ENCODE measurements at regions of chrX and their contacts with region 1.

Region 1: DNA sequence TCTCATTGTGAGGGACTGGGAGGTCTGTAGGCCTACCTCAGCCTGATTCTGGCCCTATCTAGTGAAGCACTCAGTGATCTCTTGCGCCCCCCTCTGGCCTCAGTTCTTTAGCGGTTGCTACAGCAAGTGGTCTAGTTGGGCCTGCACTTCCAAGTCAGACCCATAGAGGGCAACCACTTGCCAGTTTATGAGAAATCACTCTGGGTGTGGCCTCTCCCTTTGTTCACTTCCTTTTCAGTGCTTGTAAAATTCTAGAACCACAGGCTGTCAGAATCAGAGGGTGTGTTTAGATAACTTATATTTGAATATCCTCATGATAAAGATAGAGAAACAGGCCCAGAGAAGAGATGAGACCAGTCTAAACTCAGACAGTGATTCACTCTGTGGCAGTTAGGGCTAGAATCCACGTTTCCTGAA is 60.9 kb upstream of the LAS1L start:
- DNase-seq: peak; percentile 83
- H3K4me3 Mint-ChIP-seq: peak overlapping the region; percentile 22
- H3K27ac Mint-ChIP-seq: peak overlapping the region; percentile 90
- H3K4me1 Mint-ChIP-seq: peaks cover 44% of the 10 kb centered on the region
- H3K27me3 Mint-ChIP-seq: no peaks in the 10 kb centered on the region

Region 2: DNA sequence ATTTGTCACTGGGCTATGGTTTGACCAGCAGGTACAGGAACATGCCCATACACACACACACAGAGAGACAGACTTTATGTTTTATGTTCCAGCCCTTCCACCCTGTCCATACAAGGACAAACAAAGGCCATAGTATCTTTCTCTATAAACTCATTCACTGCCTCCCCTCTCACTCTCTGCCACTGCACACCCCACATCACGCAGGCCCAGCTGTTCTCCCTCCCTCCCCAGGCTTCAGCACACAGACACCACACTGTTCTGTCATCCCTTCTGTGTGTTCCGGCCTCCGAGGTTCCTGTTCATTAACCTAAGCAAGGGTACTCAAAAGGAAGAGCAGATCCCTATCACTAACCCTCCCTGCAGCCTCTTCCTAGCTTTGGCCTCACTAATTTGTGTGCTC is 78.7 kb before region 1 on chrX:
- intact Hi-C with region 1: no loop called
- DNase-seq: no peak
- H3K4me3 Mint-ChIP-seq: no peak overlapping the region
- H3K27ac Mint-ChIP-seq: no peak overlapping the region
- H3K4me1 Mint-ChIP-seq: no peaks in the 10 kb centered on the region
- H3K27me3 Mint-ChIP-seq: no peaks in the 10 kb centered on the region

Region 3: DNA sequence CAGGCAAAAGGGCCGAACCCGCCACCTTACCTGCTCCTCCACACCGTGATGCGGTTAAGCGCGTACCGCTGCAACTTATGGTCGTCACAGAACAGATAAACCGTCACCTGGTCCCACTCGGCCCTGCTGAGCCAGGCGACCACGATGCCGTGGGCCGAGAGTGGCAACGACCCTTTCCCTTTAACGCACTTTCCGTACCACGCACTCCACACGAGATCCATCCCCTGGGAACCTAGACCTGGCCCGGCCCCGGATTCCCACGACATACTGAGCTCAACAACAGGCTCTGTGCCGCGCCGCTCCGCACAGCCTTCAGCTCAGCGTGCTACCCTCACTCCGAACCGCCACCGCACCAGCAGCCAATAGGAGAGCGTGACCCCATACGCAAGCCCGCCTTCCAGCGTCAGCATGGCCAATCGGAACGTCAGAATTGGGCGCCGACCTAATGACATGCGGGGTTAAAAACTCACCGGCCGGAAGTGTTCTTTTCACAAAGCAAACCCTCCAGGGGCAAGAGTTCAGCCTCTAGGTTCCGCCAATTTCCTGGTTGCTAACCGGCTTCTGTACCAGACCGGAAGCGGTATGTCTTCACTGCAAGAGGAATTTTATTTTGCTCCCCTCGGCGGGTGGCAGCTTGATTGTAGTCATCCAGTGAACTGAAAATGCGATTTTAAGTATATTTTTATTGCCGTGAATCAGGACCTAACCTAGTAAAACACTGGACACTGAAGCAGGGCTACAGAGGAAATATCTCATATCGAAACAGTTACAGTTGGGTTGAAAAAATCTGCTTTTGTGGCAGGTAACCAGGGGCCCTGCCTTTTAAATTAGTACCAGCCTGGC is 60.8 kb before region 1 on chrX and contains the start of gene LAS1L:
- intact Hi-C with region 1: loop called (anchors 2 kb)
- DNase-seq: peak; percentile 90
- H3K4me3 Mint-ChIP-seq: peak within 1 kb of the TSS; percentile 100
- H3K27ac Mint-ChIP-seq: peak within 1 kb of the TSS; percentile 99
- H3K4me1 Mint-ChIP-seq: peaks cover 11% of the 10 kb centered on the region
- H3K27me3 Mint-ChIP-seq: no peaks in the 10 kb centered on the region
- total RNA-seq, gene LAS1L: 54.0 and 55.9 TPM in 2 replicates

Region 4: DNA sequence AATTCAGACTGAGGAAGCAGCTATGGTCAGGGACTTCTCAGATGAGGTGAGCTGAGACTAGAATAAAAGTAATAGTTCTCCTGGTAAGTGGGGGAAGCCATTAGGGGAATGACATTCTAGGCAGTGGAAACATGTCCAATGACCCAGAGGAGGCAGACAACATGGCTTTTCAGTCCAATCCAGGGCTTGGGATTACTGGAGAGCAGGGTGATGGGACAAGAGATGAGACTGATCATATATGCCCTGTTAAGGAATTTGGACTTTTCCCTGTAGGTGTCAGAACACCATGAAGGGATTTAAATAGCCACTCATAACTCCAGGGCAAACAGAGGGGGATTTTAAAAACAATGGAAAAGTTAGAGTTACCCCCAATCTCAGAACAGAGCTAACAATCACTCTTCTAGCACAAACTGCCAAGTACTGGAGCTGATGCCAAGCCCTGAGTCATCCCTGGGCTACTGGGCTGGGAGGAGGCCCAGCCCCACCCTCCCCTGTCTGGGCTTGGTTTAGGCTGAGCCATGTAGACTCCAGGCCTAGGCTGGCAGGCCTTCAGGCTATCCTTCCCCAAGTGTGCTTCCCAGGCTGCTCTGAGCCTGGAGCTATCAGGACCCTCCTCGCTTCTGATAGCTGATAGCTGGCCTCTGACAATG is 49.3 kb after region 1 on chrX:
- intact Hi-C with region 1: no loop called
- DNase-seq: no peak
- H3K4me3 Mint-ChIP-seq: no peak overlapping the region
- H3K27ac Mint-ChIP-seq: no peak overlapping the region
- H3K4me1 Mint-ChIP-seq: peaks cover 8% of the 10 kb centered on the region
- H3K27me3 Mint-ChIP-seq: no peaks in the 10 kb centered on the region

Region 5: GRCh38 chrX:65667503-65668376 is 72.3 kb after region 1 on chrX and contains the start of gene MSN:
- intact Hi-C with region 1: loop called (anchors 1 kb)
- DNase-seq: peak; percentile 74
- H3K4me3 Mint-ChIP-seq: peak within 1 kb of the TSS; percentile 96
- H3K27ac Mint-ChIP-seq: peak within 1 kb of the TSS; percentile 96
- H3K4me1 Mint-ChIP-seq: peaks cover 48% of the 10 kb centered on the region
- H3K27me3 Mint-ChIP-seq: no peaks in the 10 kb centered on the region
- total RNA-seq, gene MSN: 473 and 476 TPM in 2 replicates

Region 6: DNA sequence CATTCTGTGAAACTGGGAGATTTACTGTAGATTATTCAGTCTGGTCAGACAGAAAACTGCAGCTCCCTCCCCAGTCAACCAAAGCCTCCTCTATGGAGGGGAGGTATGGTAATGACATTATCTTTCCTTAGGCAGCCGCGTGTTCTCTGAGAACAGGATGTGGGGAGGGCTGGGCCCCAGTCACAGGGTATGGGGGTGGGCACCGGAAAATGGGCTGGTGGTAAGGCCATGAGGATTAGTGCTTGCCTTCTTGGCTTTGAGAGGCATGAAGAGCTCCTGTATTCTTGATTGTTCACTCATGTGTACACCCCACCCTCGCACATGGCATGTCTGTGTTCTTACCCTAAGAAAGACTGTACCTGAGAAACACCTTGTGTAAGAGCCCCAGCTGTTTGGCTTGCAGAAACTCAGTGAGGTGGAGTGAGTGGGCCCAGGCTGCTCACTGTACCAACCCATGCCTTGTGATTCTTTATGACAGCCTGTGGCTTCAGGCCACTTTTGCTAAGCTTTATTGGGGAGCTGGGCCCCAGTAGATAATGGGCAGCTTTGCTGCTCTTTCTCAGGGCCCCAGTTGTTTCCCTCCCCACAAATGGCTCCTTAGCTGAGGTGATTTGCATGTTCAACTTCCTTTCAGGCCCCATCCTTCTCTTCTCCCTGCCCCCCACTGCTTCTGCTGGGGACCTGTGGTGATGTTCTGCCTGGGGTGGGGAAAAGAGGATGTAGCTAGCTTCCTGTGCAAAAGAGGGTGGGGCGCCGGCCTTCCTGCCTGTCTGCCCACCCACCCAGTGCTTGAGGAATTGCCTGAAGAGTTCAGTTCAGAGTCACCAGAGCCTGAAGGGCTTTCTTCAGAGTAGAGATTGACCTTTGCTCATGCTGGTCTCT is 102.7 kb after region 1 on chrX:
- intact Hi-C with region 1: loop called (anchors 1 kb)
- DNase-seq: peak; percentile 64
- H3K4me3 Mint-ChIP-seq: peak overlapping the region; percentile 45
- H3K27ac Mint-ChIP-seq: peak overlapping the region; percentile 94
- H3K4me1 Mint-ChIP-seq: peaks cover 71% of the 10 kb centered on the region
- H3K27me3 Mint-ChIP-seq: no peaks in the 10 kb centered on the region

Region 7: GRCh38 chrX:65723706-65724105 is 128.2 kb after region 1 on chrX:
- intact Hi-C with region 1: loop called (anchors 1 kb)
- DNase-seq: peak; percentile 16
- H3K4me3 Mint-ChIP-seq: peak overlapping the region; percentile 4
- H3K27ac Mint-ChIP-seq: peak overlapping the region; percentile 82
- H3K4me1 Mint-ChIP-seq: peaks cover 66% of the 10 kb centered on the region
- H3K27me3 Mint-ChIP-seq: no peaks in the 10 kb centered on the region

Region 8: DNA sequence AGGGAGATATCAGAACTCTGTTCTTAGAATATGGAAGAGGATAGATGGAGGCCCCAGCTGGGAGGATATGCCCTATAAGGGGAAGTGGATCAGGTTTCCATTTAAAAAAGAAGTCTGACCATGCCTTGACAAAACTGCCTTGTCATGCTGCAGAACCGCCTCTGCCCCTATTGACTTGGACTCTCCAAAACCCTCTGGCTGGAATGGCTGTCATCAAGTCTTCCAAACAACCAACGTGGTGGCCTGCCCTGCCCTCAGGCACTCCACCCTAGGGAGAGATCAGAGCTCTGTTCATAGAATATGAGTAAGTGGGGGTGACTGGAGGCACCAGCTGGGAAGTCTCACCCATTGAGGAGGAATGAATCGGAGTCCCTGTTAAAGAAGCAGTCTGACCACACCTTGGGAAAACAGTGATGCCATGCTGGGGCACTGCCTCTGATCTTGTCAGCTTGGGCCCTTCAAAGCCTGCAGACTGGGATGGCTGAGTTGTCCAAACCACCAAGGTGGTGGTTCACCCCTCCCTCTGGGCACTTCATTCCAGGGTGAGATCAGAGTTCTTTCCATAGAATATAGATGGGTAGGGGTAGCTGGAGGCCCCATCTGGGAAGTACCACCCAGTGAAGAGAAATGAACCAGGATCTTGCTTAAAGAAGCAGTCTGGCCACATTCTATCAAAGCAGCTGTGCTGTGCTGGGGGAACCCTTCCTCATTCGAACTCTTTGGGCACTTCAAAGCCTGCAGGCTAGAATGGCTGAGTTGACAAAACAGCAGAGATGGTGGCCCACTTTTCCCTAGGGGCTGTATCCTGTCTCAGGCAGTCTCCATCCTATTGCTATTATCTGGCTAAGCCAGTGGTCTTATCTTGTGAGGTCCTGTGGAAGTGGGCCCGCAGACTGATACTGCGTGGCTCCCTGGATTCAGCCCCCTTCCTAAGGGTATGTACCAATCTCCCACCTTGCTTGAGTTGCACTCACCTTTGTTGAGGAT is 329.8 kb after region 1 on chrX:
- intact Hi-C with region 1: no loop called
- DNase-seq: no peak
- H3K4me3 Mint-ChIP-seq: no peak overlapping the region
- H3K27ac Mint-ChIP-seq: no peak overlapping the region
- H3K4me1 Mint-ChIP-seq: peaks cover 50% of the 10 kb centered on the region
- H3K27me3 Mint-ChIP-seq: no peaks in the 10 kb centered on the region

Region 9: GRCh38 chrX:65985922-65986588 is 390.6 kb after region 1 on chrX:
- intact Hi-C with region 1: loop called (anchors 1 kb)
- DNase-seq: peak; percentile 10
- H3K4me3 Mint-ChIP-seq: no peak overlapping the region
- H3K27ac Mint-ChIP-seq: no peak overlapping the region
- H3K4me1 Mint-ChIP-seq: peaks cover 18% of the 10 kb centered on the region
- H3K27me3 Mint-ChIP-seq: no peaks in the 10 kb centered on the region

Region 10: GRCh38 chrX:66046612-66047235 is 451.3 kb after region 1 on chrX:
- intact Hi-C with region 1: loop called (anchors 2 kb)
- DNase-seq: no peak
- H3K4me3 Mint-ChIP-seq: no peak overlapping the region
- H3K27ac Mint-ChIP-seq: peak overlapping the region; percentile 95
- H3K4me1 Mint-ChIP-seq: peaks cover 29% of the 10 kb centered on the region
- H3K27me3 Mint-ChIP-seq: no peaks in the 10 kb centered on the region

Measured in activated T-helper 2 cell treated with anti-CD3 and anti-CD28 coated beads, Interferon-gamma antibody, Interleukin-2, Interleukin-4, amounts not matched to agents 10 μg/mL and 5 μg/mL and 100 μg/mL, durations not matched to agents 14 hours and 24 hours and 36 hours (primary cell).